ENCODE measurements at regions of chr6 and their contacts with region 1.

Region 1: DNA sequence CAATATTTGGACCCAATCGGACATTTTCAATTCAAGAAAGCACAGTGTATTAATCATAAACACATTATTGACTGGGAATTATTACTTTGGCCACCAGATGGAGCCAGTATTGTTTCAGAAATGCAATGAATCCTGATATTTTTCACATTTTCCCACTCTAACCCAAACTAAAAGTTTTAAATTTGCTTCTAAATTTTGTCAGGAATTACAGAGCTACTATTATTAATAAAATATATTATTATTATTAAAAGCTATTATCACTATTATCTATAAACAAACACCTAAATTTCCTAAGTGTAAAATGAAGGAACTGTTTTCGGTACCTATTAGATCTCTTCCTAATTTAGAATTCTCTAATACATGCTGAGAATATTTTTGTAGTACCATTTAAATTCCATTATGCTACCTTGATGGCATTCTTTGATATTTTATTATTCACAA is 245.3 kb downstream of the OGFRL1 start:
- DNase-seq: no peak
- ATAC-seq: no peak
- H3K4me3 ChIP-seq: no peak overlapping the region
- H3K27ac ChIP-seq: no peak overlapping the region
- H3K4me1 ChIP-seq: no peaks in the 10 kb centered on the region
- H3K27me3 ChIP-seq: no peaks in the 10 kb centered on the region

Region 2: DNA sequence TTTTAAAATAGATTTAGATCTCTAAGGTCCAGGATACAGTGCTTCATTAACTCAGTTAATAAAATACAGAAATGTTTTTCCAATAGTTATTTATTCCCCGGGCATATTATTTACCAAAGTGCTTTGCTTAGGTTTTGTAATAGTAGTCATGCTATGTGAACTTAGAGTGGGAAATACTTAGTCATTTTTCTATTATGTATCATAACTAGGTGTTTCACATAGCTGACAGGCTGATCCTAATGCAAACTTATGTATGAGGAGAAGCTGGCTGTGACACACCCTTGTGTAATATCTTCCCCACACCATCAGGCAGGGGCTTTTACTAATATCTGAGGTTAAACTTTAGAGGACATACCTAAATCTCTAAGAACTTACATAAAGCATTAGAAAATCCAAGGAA is 74.7 kb after region 1 on chr6:
- intact Hi-C with region 1: loop called in 1 of 2 experiments (anchors 5 kb)
- DNase-seq: no peak
- ATAC-seq: no peak
- H3K4me3 ChIP-seq: no peak overlapping the region
- H3K27ac ChIP-seq: no peak overlapping the region
- H3K4me1 ChIP-seq: no peaks in the 10 kb centered on the region
- H3K27me3 ChIP-seq: no peaks in the 10 kb centered on the region

Region 3: DNA sequence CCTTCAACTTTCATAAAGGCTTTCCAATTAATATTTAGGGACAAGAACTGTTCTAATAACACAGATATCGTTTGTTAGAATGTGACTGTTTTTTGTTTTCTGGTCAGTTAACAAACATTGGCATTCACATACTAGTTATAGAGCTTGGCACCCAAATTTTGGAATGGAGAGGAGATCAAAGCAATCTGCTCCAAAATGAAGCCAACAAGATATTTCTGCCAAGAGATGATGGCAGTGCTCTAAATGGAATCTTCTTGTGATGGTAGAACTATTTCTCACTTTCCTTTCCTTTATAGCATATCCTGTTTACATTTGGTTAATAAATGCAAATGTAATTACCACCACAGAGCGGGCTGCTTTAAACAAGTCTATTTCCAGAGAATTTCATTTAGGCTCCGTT is 144.1 kb after region 1 on chr6:
- intact Hi-C with region 1: no loop called
- DNase-seq: no peak
- ATAC-seq: no peak
- H3K4me3 ChIP-seq: no peak overlapping the region
- H3K27ac ChIP-seq: no peak overlapping the region
- H3K4me1 ChIP-seq: no peaks in the 10 kb centered on the region
- H3K27me3 ChIP-seq: peaks cover 0 to 2% of the 10 kb centered on the region in 2 donors

Region 4: GRCh38 chr6:71721642-71722041 is 187.7 kb after region 1 on chr6:
- intact Hi-C with region 1: loop called (anchors 5 to 10 kb)
- DNase-seq: peak in 1 of 2 donors; percentile 50
- ATAC-seq: peak; percentile 70
- H3K4me3 ChIP-seq: no peak overlapping the region
- H3K27ac ChIP-seq: no peak overlapping the region
- H3K4me1 ChIP-seq: no peaks in the 10 kb centered on the region
- H3K27me3 ChIP-seq: no peaks in the 10 kb centered on the region

Region 5: GRCh38 chr6:71727632-71728294 is 193.8 kb after region 1 on chr6:
- intact Hi-C with region 1: loop called (anchors 5 to 10 kb)
- DNase-seq: no peak
- ATAC-seq: peak; percentile 51
- H3K4me3 ChIP-seq: no peak overlapping the region
- H3K27ac ChIP-seq: no peak overlapping the region
- H3K4me1 ChIP-seq: no peaks in the 10 kb centered on the region
- H3K27me3 ChIP-seq: no peaks in the 10 kb centered on the region

Region 6: GRCh38 chr6:71886184-71887005 is 352.4 kb after region 1 on chr6 and contains the start of gene RIMS1:
- intact Hi-C with region 1: loop called in 1 of 2 experiments (anchors 10 kb)
- DNase-seq: peak; percentile 48 to 59
- ATAC-seq: peak; percentile 30
- H3K4me3 ChIP-seq: peak within 1 kb of the TSS; percentile 20 to 76
- H3K27ac ChIP-seq: no peak within 1 kb of the TSS
- H3K4me1 ChIP-seq: no peaks in the 10 kb centered on the region
- H3K27me3 ChIP-seq: peaks cover 0 to 2% of the 10 kb centered on the region in 2 donors
- total RNA-seq, gene RIMS1: 4.8 to 5.7 TPM

Region 7: DNA sequence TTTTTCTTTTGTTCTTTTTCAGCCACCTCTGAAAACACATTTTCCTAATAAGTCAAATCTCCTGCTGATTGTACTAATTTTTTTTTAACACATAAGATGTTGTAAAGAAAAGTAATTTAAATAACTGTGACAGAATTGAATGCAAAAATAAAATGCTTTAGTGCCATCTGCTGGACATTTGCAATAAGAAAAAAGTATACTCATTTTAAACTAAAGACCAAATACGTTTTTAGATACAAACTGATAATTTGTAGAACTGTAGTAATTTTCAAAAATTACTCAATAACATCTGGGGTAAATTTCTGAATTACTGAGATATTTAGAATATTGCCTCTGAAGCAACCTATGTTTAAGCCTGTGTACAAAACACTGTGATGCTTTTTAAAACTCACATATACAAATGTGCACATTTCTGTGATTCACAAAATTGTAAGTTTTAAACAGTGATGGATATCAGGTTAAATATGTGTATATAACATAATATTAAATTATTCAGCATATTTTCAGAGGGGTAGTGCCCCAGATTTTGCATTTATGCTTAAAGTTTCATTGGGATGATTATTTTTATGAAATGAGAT is 551.1 kb after region 1 on chr6:
- intact Hi-C with region 1: loop called (anchors 2 to 5 kb)
- DNase-seq: no peak
- ATAC-seq: no peak
- H3K4me3 ChIP-seq: no peak overlapping the region
- H3K27ac ChIP-seq: no peak overlapping the region
- H3K4me1 ChIP-seq: no peaks in the 10 kb centered on the region
- H3K27me3 ChIP-seq: no peaks in the 10 kb centered on the region